Activated CD4-positive, alpha-beta memory T cell treated with anti-CD3 and anti-CD28 coated beads for 36 hours (primary cell): ENCODE measurements at regions of chr20 and their contacts with region 1.

Region 1: GRCh38 chr20:63627129-63627750 is 339 bp upstream of the GMEB2 start:
- DNase-seq: peak; percentile 96
- H3K4me3 Mint-ChIP-seq: peak overlapping the region; percentile 98
- H3K27ac Mint-ChIP-seq: peak overlapping the region; percentile 97
- H3K4me1 Mint-ChIP-seq: peaks cover 36% of the 10 kb centered on the region
- H3K27me3 Mint-ChIP-seq: no peaks in the 10 kb centered on the region

Region 2: DNA sequence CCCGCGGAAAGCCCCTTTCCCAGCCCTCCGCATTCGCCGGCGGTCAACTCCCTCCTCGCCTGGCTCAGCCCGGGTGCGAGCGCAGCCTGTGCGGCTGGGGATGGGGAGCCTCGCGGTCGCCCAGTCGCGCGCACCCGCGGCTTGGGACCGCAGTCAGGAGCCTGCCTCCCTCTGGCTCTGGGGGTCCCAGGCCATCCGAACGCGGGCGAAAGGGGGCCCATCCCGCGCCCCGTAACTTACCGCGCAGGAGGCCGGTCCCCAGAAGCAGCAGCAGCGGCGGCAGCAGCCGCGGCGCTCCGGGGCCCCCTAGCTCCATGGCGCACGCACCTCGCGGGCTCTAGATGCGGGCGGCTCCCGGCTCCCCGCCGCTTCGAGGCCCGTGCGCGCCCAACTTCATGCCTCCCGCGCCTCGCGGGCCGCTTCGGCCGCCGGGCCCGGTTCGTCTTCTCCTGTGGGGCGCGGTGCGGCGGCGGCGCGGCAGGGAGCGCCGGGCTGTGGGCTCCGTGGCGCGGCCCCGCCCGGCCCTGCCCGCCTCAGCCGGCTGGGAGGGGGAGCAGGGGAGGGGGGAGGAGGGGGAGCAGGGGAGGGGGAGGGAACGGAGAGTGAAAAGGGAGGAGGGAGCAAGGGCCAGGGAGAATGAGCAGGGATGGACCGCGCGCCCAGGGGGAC is 266.3 kb before region 1 on chr20 and contains the start of gene CHRNA4:
- CTCF ChIA-PET with region 1: no interaction called
- POLR2A ChIA-PET with region 1: no interaction called
- intact Hi-C with region 1: no loop called
- DNase-seq: no peak
- H3K4me3 Mint-ChIP-seq: no peak within 1 kb of the TSS
- H3K27ac Mint-ChIP-seq: no peak within 1 kb of the TSS
- H3K4me1 Mint-ChIP-seq: no peaks in the 10 kb centered on the region
- H3K27me3 Mint-ChIP-seq: peaks cover 29% of the 10 kb centered on the region
- total RNA-seq, gene CHRNA4: not detected

Region 3: DNA sequence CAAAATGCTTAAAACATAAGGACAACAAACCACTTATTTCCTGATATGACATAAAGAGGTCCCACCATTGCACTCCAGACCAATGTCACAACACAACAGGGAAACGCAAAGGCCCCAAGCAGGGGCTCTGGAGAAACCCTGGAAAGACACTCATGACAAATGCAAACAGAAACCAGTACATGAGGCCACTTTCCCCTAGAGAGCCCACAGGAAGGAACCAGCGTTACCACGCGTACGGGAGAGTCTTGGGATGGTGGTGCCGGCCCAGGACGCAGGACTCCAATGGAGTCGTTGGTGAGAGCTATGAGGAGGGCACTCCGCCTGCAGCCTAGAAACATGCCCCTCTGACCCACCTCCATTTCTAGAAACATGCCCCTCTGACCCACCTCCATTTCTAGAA is 20.6 kb before region 1 on chr20:
- CTCF ChIA-PET with region 1: no interaction called
- POLR2A ChIA-PET with region 1: no interaction called
- intact Hi-C with region 1: no loop called
- DNase-seq: no peak
- H3K4me3 Mint-ChIP-seq: no peak overlapping the region
- H3K27ac Mint-ChIP-seq: no peak overlapping the region
- H3K4me1 Mint-ChIP-seq: peaks cover 6% of the 10 kb centered on the region
- H3K27me3 Mint-ChIP-seq: no peaks in the 10 kb centered on the region

Region 4: DNA sequence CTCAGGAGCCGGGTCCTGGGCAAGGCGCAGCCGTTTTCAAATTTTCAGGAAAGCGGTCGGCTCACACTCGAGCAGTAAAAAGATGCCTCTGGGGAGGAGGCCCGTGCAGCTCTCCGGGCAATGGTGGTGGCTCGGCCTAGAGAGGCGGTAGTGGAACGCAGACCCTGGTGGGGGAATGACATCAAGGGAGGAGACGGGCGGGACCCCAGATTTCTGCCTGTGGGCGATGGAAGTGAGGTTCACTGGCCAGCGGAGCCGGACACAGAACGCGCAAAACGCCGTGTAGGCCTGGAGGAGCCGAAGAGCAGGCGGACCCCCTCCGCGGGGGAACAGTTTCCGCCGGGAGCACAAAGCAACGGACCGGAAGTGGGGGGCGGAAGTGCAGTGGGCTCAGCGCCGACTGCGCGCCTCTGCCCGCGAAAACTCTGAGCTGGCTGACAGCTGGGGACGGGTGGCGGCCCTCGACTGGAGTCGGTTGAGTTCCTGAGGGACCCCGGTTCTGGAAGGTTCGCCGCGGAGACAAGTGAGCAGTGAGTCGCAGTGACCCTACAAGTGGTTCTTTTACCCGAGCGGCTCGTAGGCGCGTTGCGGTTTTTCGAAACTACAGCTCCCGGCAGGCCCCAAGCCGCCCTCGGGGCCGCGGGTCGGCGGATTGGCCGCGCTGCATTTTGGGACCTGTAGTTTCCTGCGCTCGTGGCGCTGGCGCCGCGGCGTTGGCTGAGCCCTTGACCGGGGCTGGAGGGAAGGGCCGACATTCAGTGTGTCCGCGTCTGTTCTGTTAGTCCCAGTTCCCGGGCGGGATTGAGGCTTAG is 30.9 kb after region 1 on chr20 and contains the start of gene RTEL1:
- CTCF ChIA-PET with region 1: interaction called, 3 read pairs
- POLR2A ChIA-PET with region 1: interaction called, 17 read pairs
- intact Hi-C with region 1: no loop called
- DNase-seq: peak; percentile 92
- H3K4me3 Mint-ChIP-seq: peak within 1 kb of the TSS; percentile 92
- H3K27ac Mint-ChIP-seq: peak within 1 kb of the TSS; percentile 93
- H3K4me1 Mint-ChIP-seq: peaks cover 29% of the 10 kb centered on the region
- H3K27me3 Mint-ChIP-seq: no peaks in the 10 kb centered on the region
- total RNA-seq, gene RTEL1: 38.0 to 38.3 TPM

Region 5: DNA sequence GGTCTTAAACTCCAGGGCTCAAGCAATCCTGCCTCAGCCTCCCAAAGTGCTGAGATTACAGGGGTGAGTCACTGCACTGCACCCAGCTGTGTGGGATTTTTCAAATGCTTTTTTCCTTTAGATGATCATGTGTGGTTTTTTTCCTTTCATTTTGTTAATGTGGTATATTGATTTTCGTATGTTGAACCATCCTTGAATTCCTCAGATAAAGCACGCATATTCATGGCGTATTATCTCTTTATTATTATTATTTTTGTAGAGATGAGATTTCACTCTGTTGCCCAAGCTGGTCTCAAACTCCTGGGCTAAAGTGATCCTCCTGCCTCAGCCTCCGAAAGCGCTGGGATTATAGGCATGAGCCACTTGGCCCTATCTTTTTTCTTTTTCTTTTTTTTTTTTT is 87.6 kb after region 1 on chr20:
- CTCF ChIA-PET with region 1: no interaction called
- POLR2A ChIA-PET with region 1: no interaction called
- intact Hi-C with region 1: no loop called
- DNase-seq: no peak
- H3K4me3 Mint-ChIP-seq: no peak overlapping the region
- H3K27ac Mint-ChIP-seq: no peak overlapping the region
- H3K4me1 Mint-ChIP-seq: peaks cover 50% of the 10 kb centered on the region
- H3K27me3 Mint-ChIP-seq: no peaks in the 10 kb centered on the region